B cell (primary cell): ENCODE measurements at regions of chr9 and their contacts with region 1.

Region 1: DNA sequence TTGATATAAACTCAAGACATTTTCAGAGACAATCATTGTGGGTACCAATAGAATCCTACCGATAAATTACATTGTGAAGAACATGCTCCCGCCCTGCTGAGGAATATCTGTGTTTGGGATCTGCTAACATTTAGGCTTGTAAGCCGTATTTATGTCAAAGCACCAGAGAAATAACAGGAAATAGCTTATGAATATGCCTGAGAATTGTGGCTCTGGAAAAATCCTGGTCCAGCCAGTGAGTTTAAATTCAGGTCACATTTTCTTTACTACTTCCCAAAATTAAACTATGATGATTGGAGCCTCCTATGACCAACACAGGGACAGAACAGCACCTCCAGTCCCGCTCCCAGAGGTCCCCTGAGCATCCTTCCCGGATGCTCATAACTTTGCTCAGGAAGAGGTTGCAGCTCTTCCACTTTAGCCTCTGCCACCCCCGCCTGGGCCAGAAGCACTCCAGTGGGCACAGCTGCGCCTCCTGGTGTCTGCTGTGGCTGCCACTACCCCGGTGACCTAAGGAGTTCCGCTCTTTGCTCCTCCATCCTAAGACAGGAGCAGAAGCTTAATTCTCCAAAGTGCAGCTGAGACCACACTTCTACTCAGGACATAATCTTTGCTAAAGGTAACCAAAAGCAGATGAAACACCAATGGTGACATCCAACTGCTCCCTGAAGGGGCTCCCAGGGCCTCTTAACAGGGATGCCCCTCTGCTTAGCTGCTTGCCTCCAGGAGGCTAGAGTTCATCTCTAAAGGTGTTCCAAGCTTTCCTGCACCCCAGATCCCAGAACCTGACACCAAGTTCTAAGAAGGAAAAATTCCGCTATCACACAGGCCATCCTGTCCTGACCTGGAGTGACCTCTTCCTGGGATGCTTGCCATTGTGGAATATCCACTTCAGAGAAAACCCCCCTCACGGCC is 58.8 kb downstream of the SLC1A1 start:
- DNase-seq: no peak
- ATAC-seq: no peak
- H3K4me3 ChIP-seq: no peak overlapping the region
- H3K4me3 Mint-ChIP-seq: no peak overlapping the region
- H3K27ac ChIP-seq: no peak overlapping the region
- H3K27ac Mint-ChIP-seq: no peak overlapping the region
- H3K4me1 ChIP-seq: no peaks in the 10 kb centered on the region
- H3K4me1 Mint-ChIP-seq: no peaks in the 10 kb centered on the region
- H3K27me3 ChIP-seq: no peaks in the 10 kb centered on the region
- H3K27me3 Mint-ChIP-seq: peaks cover 7% of the 10 kb centered on the region
- CTCF ChIP-seq: peak; percentile 13

Region 2: GRCh38 chr9:4382722-4383317 is 166.2 kb before region 1 on chr9:
- CTCF ChIA-PET with region 1: interaction called, 5 read pairs
- POLR2A ChIA-PET with region 1: no interaction called
- intact Hi-C with region 1: loop called (anchors 1 kb)
- DNase-seq: peak; percentile 13
- ATAC-seq: no peak
- H3K4me3 ChIP-seq: no peak overlapping the region
- H3K4me3 Mint-ChIP-seq: no peak overlapping the region
- H3K27ac ChIP-seq: no peak overlapping the region
- H3K27ac Mint-ChIP-seq: no peak overlapping the region
- H3K4me1 ChIP-seq: no peaks in the 10 kb centered on the region
- H3K4me1 Mint-ChIP-seq: no peaks in the 10 kb centered on the region
- H3K27me3 ChIP-seq: peaks cover 0 to 4% (median 0%) of the 10 kb centered on the region in 4 experiments
- H3K27me3 Mint-ChIP-seq: peaks cover 3% of the 10 kb centered on the region
- CTCF ChIP-seq: peak; percentile 25

Region 3: GRCh38 chr9:4604678-4605095 is 55.6 kb after region 1 on chr9:
- CTCF ChIA-PET with region 1: no interaction called
- POLR2A ChIA-PET with region 1: no interaction called
- intact Hi-C with region 1: no loop called
- DNase-seq: peak; percentile 69
- ATAC-seq: peak; percentile 33
- H3K4me3 ChIP-seq: no peak overlapping the region
- H3K4me3 Mint-ChIP-seq: no peak overlapping the region
- H3K27ac ChIP-seq: no peak overlapping the region
- H3K27ac Mint-ChIP-seq: no peak overlapping the region
- H3K4me1 ChIP-seq: no peaks in the 10 kb centered on the region
- H3K4me1 Mint-ChIP-seq: peaks cover 4% of the 10 kb centered on the region
- H3K27me3 ChIP-seq: peaks cover 0 to 3% (median 0%) of the 10 kb centered on the region in 4 experiments
- H3K27me3 Mint-ChIP-seq: no peaks in the 10 kb centered on the region
- CTCF ChIP-seq: peak; percentile 59

Region 4: DNA sequence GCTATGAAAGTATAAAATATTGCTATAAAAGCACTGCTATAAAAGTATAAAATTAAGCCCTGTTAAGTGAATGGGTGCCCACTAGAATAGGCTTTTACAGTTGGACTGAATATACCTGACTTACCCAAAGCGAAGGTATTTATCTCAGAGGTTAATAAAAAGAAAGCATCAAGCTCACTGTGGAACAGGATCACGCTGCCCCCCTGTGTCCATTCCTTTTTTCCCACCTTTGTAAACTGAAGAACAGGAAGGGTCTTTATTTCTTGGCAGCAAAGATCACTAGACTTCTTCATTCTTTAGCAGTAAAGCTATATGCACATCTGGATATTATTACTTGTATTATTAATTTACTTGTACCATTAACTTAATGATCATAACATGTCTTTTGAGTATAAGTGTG is 91.0 kb after region 1 on chr9:
- CTCF ChIA-PET with region 1: no interaction called
- POLR2A ChIA-PET with region 1: no interaction called
- intact Hi-C with region 1: no loop called
- DNase-seq: peak; percentile 13
- ATAC-seq: no peak
- H3K4me3 ChIP-seq: no peak overlapping the region
- H3K4me3 Mint-ChIP-seq: no peak overlapping the region
- H3K27ac ChIP-seq: no peak overlapping the region
- H3K27ac Mint-ChIP-seq: no peak overlapping the region
- H3K4me1 ChIP-seq: no peaks in the 10 kb centered on the region
- H3K4me1 Mint-ChIP-seq: peaks cover 3% of the 10 kb centered on the region
- H3K27me3 ChIP-seq: no peaks in the 10 kb centered on the region
- H3K27me3 Mint-ChIP-seq: peaks cover 13% of the 10 kb centered on the region
- CTCF ChIP-seq: peak; percentile 18